ENCODE measurements at regions of chr1 and their contacts with region 1.

Region 1: GRCh38 chr1:226702957-226703831 is 35.9 kb downstream of the ITPKB start:
- DNase-seq: peak; percentile 94
- ATAC-seq: peak; percentile 77
- H3K4me3 ChIP-seq: peak overlapping the region; percentile 52
- H3K27ac ChIP-seq: peak overlapping the region; percentile 99
- H3K4me1 ChIP-seq: peaks cover 6% of the 10 kb centered on the region
- H3K27me3 ChIP-seq: no peaks in the 10 kb centered on the region
- CTCF ChIP-seq: no peak
- POLR2A ChIP-seq: peak; percentile 70
- RAD21 ChIP-seq: no peak

Region 2: DNA sequence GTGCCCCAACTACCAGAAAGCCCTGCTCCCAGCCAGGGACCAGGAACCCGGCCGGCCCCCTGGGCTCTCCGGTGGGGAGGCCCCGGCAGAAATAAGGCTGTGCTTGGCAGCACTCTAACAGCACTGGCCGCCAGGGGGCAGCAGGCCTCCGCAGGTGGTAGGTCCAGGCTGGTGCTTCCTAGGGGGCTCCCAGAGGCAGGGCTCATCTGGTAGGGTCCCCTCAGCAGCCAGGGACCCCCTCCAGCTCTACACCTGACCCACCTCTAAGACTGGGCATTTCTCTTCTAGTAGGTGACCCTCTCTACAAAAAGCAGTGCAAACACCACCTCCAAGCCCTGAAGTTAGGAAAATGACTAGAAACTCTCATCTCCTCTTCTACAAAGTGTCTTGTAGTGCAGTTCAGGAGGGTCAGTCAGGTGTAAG is 69.0 kb before region 1 on chr1:
- CTCF ChIA-PET with region 1: no interaction called
- POLR2A ChIA-PET with region 1: no interaction called
- dilution Hi-C with region 1: no loop called
- in situ Hi-C with region 1: no loop called
- intact Hi-C with region 1: loop called (anchors 2 kb)
- DNase-seq: peak; percentile 59
- ATAC-seq: peak; percentile 95
- H3K4me3 ChIP-seq: no peak overlapping the region
- H3K27ac ChIP-seq: no peak overlapping the region
- H3K4me1 ChIP-seq: no peaks in the 10 kb centered on the region
- H3K27me3 ChIP-seq: no peaks in the 10 kb centered on the region; the same call in 1 of the 2 replicates
- CTCF ChIP-seq: peak; percentile 91
- POLR2A ChIP-seq: no peak
- RAD21 ChIP-seq: peak; percentile 97

Region 3: DNA sequence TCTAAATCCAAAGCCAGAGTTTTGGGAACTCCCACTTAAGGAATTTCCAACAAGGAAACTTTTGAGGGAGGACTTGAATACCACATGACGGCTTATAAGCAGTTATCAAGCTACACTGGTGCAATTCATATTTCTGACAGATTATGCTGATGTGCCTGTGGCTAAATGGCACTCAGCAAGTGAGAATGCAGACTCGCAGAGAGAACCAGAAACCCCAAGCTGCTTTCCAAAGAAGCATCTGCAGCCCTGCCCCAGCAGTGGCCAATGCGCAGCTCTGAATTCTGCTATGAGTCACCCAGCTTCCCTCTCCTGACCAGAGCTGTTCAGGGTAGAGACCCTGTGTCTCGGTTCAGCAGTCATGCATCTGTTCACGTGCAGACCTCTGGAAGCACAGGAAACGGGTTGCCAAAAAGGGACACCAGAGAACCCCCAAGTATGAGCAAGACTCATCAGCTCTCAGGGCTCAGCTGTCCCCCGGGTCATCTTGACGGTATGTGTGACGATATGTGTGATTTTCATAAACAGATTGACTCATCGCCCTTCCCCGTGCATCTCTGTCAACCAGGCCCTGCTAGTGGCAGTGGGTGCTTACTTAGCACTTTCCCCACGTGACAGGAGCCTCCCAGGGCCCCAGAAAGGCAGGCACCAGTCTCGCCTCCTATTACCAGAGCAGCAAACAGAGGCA is 40.4 kb before region 1 on chr1:
- CTCF ChIA-PET with region 1: no interaction called
- POLR2A ChIA-PET with region 1: no interaction called
- dilution Hi-C with region 1: no loop called
- in situ Hi-C with region 1: no loop called
- intact Hi-C with region 1: loop called (anchors 1 kb)
- DNase-seq: peak; percentile 100
- ATAC-seq: peak; percentile 93
- H3K4me3 ChIP-seq: no peak overlapping the region
- H3K27ac ChIP-seq: peak overlapping the region; percentile 63
- H3K4me1 ChIP-seq: peaks cover 26% of the 10 kb centered on the region
- H3K27me3 ChIP-seq: no peaks in the 10 kb centered on the region
- CTCF ChIP-seq: no peak
- POLR2A ChIP-seq: no peak; the same call in 1 of the 2 replicates
- RAD21 ChIP-seq: no peak; the same call in 1 of the 2 replicates

Region 4: GRCh38 chr1:226820941-226821718 is 117.9 kb after region 1 on chr1:
- CTCF ChIA-PET with region 1: no interaction called
- POLR2A ChIA-PET with region 1: no interaction called
- dilution Hi-C with region 1: no loop called
- in situ Hi-C with region 1: no loop called
- intact Hi-C with region 1: loop called (anchors 1 kb)
- DNase-seq: peak; percentile 100
- ATAC-seq: peak; percentile 94
- H3K4me3 ChIP-seq: no peak overlapping the region
- H3K27ac ChIP-seq: peak overlapping the region; percentile 36; the same call in 1 of the 2 replicates
- H3K4me1 ChIP-seq: peaks cover 5% of the 10 kb centered on the region; the same call in 1 of the 2 replicates
- H3K27me3 ChIP-seq: no peaks in the 10 kb centered on the region
- CTCF ChIP-seq: no peak
- POLR2A ChIP-seq: no peak
- RAD21 ChIP-seq: peak; percentile 33; the same call in 1 of the 2 replicates

Measured in IMR-90 (cell line).